ENCODE measurements at regions of chr2 and their contacts with region 1.

Region 1: GRCh38 chr2:54455563-54456361 is at the start of gene SPTBN1:
- DNase-seq: peak; percentile 93 to 96
- ATAC-seq: peak; percentile 96
- H3K4me3 ChIP-seq: peak within 1 kb of the TSS; percentile 60 to 93
- H3K27ac ChIP-seq: peak within 1 kb of the TSS; percentile 47 to 92
- H3K4me1 ChIP-seq: peaks cover 0 to 3% of the 10 kb centered on the region in 2 donors
- H3K27me3 ChIP-seq: no peaks in the 10 kb centered on the region
- total RNA-seq, gene SPTBN1: 322 to 540 TPM

Region 2: DNA sequence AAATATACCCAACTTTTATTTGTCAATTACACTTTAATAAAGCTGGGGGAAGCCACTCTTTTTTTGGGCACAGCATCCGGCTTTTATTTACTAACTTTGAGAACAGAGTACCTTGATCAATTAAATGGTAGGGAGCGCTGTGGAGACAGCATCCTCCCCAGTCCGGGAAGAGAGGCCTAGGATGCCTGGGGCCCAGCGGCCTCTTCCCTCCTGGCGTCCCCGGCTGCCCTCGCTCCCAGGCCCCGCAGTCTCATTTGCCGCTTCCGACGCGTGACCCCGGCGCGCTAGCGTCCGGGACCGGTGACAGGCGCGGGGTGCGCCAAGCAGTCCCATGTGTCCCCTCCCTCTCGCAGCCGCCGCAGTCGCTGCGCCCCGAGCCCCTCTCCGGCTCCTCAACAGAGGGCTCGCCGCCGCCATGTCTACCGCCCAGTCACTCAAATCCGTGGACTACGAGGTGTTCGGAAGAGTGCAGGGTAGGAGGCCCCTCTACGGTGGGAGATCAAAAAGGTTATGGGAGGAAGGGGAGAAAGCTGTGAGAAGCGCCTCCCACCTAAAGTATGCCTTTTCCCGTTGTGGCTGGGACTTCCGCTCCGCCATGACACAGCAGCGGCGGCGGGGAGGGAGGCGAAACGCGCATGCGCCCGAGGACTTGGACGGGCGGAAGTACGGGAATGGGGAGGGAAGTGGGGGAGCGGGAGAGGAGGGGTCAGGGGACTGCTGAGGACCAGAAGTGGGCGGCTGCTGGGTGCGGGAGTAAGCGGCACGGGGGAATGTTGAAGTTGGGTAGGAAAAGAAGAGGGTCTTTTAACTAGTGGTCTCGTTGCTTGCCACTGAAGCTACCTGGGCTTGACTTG is 340.3 kb before region 1 on chr2 and contains the start of gene ACYP2:
- intact Hi-C with region 1: loop called (anchors 5 to 10 kb)
- DNase-seq: peak; percentile 98 to 99
- ATAC-seq: peak; percentile 98
- H3K4me3 ChIP-seq: peak within 1 kb of the TSS; percentile 23 to 48
- H3K27ac ChIP-seq: peak within 1 kb of the TSS; percentile 78 to 88
- H3K4me1 ChIP-seq: no peaks in the 10 kb centered on the region
- H3K27me3 ChIP-seq: no peaks in the 10 kb centered on the region
- total RNA-seq, gene ACYP2: 16.3 to 21.2 TPM

Region 3: DNA sequence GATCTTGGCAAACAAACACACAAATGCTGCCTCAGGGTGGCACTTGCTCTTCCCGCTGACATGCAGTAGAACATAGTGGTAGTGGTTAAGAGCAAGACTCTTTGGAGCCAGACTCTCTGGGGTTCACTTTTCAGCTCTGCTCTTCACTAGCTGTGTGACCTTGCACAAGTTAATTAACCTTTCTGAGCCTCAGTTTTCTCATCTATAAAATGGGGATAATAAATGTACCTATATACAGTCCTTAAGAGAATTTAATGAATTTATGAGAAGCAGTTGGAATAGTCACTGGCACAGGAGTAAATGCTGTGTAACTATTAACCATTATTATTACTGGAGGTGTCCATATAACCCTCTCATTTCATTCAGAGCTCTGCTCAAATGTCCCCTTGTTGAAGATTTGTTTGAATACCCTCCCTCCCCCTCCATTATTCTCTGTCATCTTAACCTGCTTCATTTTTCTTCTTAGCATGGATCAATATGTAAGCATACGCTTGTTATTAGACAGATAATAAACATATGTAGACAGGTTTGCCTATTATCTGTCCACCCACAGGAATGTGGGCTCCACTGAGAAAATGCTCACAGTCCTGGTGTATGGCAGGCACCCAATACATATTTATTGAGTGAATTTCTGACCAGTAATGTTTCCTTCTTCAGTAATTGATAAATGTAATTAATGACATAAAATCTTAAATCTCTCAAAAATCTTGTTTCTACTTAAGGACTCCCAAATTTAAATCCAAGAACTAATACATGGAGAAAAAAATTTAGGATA is 264.2 kb before region 1 on chr2:
- intact Hi-C with region 1: no loop called
- DNase-seq: no peak
- ATAC-seq: no peak
- H3K4me3 ChIP-seq: no peak overlapping the region
- H3K27ac ChIP-seq: no peak overlapping the region
- H3K4me1 ChIP-seq: no peaks in the 10 kb centered on the region
- H3K27me3 ChIP-seq: no peaks in the 10 kb centered on the region

Region 4: GRCh38 chr2:54206596-54206995 is 249.2 kb before region 1 on chr2:
- intact Hi-C with region 1: loop called (anchors 1 to 10 kb)
- DNase-seq: no peak
- ATAC-seq: peak; percentile 67
- H3K4me3 ChIP-seq: no peak overlapping the region
- H3K27ac ChIP-seq: no peak overlapping the region
- H3K4me1 ChIP-seq: peaks cover 0 to 5% of the 10 kb centered on the region in 2 donors
- H3K27me3 ChIP-seq: no peaks in the 10 kb centered on the region

Region 5: GRCh38 chr2:54310311-54310710 is 145.5 kb before region 1 on chr2:
- intact Hi-C with region 1: no loop called
- DNase-seq: no peak
- ATAC-seq: no peak
- H3K4me3 ChIP-seq: no peak overlapping the region
- H3K27ac ChIP-seq: no peak overlapping the region
- H3K4me1 ChIP-seq: no peaks in the 10 kb centered on the region
- H3K27me3 ChIP-seq: peaks cover 0 to 1% of the 10 kb centered on the region in 2 donors

Region 6: GRCh38 chr2:54330162-54330925 is 125.4 kb before region 1 on chr2:
- intact Hi-C with region 1: loop called (anchors 2 to 5 kb)
- DNase-seq: peak; percentile 98 to 99
- ATAC-seq: peak; percentile 99
- H3K4me3 ChIP-seq: peak overlapping the region; percentile 64 to 66
- H3K27ac ChIP-seq: peak overlapping the region; percentile 89 to 96
- H3K4me1 ChIP-seq: no peaks in the 10 kb centered on the region
- H3K27me3 ChIP-seq: no peaks in the 10 kb centered on the region

Region 7: DNA sequence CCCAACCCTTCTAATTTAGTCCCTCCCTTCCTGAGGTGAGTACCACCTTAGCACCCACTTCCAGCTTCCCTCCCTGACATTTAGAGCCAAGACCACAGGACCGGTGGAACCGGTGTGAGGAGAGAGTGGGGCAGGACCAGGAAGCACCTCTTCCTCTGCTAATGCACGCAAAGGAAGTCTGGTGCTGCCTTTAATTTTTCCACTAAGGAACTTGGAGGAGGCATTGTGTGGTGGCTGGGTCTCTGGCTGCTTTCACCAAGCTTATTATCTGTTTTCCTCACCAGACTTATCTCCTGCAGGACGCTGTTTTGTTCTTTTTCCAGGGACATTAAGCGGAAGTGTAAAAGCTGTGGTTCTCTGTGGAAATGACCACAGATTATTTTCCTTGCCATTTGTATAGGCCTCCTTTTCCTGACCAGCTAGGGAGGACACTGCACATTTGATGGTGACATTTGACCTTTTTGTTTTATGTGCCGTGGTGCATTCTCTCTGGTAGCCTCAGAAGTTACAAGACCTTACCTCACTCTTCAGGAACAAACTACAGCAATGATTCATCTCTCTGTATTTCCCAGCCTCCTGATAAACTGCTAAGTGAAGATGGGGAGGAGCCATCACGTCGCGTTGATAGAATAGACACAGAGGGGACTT is 39.5 kb before region 1 on chr2:
- intact Hi-C with region 1: no loop called
- DNase-seq: no peak
- ATAC-seq: peak; percentile 41
- H3K4me3 ChIP-seq: no peak overlapping the region
- H3K27ac ChIP-seq: no peak overlapping the region
- H3K4me1 ChIP-seq: no peaks in the 10 kb centered on the region
- H3K27me3 ChIP-seq: no peaks in the 10 kb centered on the region

Measured in aorta (tissue), 5 donors.